Dorsolateral prefrontal cortex (tissue), 120 donors: ENCODE measurements at regions of chr6 and their contacts with region 1.

Region 1: GRCh38 chr6:138115877-138116660 is 8.8 kb upstream of the PERP start:
- DNase-seq: peak; percentile 31 to 76 (median 61)
- H3K4me3 ChIP-seq: peak overlapping the region in 1 of 59 donors; percentile 7
- H3K27ac ChIP-seq: no peak overlapping the region
- H3K27me3 ChIP-seq: peaks cover 0 to 10% (median 0%) of the 10 kb centered on the region in 45 donors
- CTCF ChIP-seq: peak; percentile 69 to 98 (median 86)

Region 2: GRCh38 chr6:138161338-138162110 is 45.5 kb after region 1 on chr6 and contains the start of gene ARFGEF3:
- intact Hi-C with region 1: loop called (anchors 2 to 5 kb)
- DNase-seq: peak in 9 of 10 donors; percentile 41 to 84 (median 64)
- H3K4me3 ChIP-seq: peak within 1 kb of the TSS; percentile 67 to 95 (median 85)
- H3K27ac ChIP-seq: peak within 1 kb of the TSS; percentile 79 to 98 (median 95)
- H3K27me3 ChIP-seq: no peaks in the 10 kb centered on the region
- CTCF ChIP-seq: peak in 4 of 56 donors; percentile 3 to 38 (median 16)
- total RNA-seq, gene ARFGEF3: 30.0 to 93.7 (median 67.0) TPM

Region 3: GRCh38 chr6:138211027-138211581 is 95.0 kb after region 1 on chr6:
- intact Hi-C with region 1: loop called (anchors 2 to 5 kb)
- DNase-seq: peak in 2 of 10 donors; percentile 52 to 61
- H3K4me3 ChIP-seq: no peak overlapping the region
- H3K27ac ChIP-seq: peak overlapping the region in 54 of 59 donors; percentile 2 to 90 (median 68)
- H3K27me3 ChIP-seq: no peaks in the 10 kb centered on the region
- CTCF ChIP-seq: peak in 55 of 56 donors; percentile 31 to 87 (median 59)

Region 4: GRCh38 chr6:138287144-138287955 is 171.3 kb after region 1 on chr6:
- intact Hi-C with region 1: loop called in 1 of 2 experiments (anchors 5 kb)
- DNase-seq: peak in 1 of 10 donors; percentile 59
- H3K4me3 ChIP-seq: no peak overlapping the region
- H3K27ac ChIP-seq: peak overlapping the region in 10 of 59 donors; percentile 7 to 45 (median 27)
- H3K27me3 ChIP-seq: no peaks in the 10 kb centered on the region
- CTCF ChIP-seq: peak in 55 of 56 donors; percentile 25 to 73 (median 56)

Region 5: DNA sequence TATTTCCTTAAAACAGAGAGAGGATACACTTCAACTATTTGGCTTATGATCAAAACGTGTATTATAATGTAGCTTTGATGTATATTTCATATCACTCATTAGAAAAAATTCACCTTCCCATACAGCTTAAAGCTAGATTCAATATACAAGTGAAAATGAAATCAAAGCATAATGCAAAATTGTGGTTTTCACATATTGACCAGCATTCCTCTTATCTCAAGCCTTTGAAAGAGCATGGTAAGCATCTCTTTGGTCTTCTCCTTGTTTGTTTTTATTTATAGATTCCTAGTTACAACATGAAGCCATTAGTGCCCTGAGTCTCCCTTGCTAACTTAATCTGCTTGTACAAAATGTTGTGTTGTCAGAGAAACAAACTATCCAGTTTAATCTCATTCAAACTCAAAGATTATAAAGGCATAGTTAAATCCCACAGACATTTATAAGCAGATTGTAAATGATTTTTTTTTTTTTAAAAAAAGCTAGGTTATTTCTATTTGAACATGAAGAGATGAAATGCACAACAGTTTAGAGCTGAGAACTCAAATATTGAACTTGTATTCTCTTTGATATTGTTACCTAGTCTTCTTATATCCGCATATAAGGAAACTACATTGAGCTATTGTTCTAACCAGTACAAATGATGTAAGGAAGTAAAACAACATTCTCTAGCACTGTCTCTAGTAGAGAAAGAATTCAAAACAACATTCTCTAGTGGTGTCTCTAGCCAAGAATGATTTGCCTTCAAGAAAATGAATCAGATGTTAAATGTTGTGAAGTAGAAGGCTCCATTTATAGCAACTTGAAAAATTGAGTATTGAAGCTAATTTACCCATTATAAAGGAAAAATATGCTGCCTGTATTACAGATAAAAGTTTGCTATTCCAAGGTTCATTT is 230.5 kb after region 1 on chr6:
- intact Hi-C with region 1: no loop called
- DNase-seq: no peak
- H3K4me3 ChIP-seq: no peak overlapping the region
- H3K27ac ChIP-seq: peak overlapping the region in 3 of 59 donors; percentile 16 to 25 (median 22)
- H3K27me3 ChIP-seq: no peaks in the 10 kb centered on the region
- CTCF ChIP-seq: no peak

Region 6: DNA sequence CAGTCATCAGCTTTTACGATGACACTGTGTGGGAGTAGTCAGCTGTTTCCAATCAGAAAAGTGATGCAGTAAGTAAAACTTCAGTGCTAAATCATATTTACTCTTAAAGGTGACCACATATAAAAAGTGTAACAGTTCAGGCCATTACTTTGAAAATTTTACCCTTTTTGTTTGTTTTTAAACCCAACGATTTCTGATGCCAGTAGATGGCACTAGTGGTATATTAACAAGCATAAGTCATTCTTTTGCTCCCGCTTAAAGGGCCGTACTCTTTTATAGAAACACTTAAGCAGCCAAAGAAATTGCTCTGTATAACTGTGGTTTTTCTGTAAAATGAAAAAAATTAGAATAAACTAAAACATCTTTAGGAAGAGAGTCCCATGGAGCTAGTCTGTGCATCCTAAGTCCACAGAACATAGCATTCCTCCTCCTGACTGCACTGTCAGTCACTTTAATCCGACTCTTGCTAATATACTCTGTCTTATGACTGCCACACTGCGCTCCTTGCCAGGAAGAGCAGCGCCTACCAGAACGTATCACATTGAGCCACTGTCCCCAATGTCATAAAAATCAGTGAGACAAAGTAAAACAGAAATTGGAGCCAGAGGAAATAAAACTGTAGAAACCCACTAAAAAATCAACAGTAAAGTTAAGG is 313.0 kb after region 1 on chr6:
- intact Hi-C with region 1: loop called in 1 of 2 experiments (anchors 10 kb)
- DNase-seq: peak in 1 of 10 donors; percentile 14
- H3K4me3 ChIP-seq: peak overlapping the region in 50 of 59 donors; percentile 1 to 57 (median 36)
- H3K27ac ChIP-seq: peak overlapping the region in 26 of 59 donors; percentile 5 to 88 (median 72)
- H3K27me3 ChIP-seq: no peaks in the 10 kb centered on the region
- CTCF ChIP-seq: peak in 55 of 56 donors; percentile 47 to 92 (median 73)

Region 7: DNA sequence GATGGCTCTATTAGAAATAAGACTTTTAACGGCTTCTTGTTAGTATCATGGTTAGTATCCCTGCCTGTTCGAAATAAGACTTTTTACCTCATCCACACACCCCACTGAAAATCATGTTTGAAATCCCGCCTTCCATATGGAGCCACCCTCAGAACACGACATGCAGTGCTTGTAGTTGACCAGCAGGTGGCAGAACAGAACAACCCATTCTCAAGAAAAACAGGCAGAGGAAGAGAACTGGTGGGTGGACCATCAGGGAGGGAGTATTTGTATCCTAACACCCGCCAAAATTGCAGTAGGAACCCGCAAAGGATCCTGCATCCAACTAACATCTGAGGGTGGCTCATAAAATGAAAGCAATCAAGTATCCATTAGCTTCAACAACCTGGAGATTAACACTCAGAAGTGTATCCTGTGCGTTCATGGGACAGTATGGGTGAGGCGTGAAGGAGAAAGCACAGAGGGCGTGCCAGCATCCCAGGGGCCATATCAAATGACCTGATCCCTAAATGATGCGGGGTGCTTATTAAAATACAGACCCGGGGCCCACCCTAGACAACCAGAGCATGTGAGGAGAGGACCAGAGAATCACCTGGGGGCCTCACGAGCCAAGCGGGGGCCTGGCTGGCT is 472.9 kb after region 1 on chr6:
- intact Hi-C with region 1: loop called (anchors 2 to 10 kb)
- DNase-seq: peak in 7 of 10 donors; percentile 47 to 64 (median 56)
- H3K4me3 ChIP-seq: no peak overlapping the region
- H3K27ac ChIP-seq: no peak overlapping the region
- H3K27me3 ChIP-seq: peaks cover 0 to 3% (median 0%) of the 10 kb centered on the region in 45 donors
- CTCF ChIP-seq: peak; percentile 80 to 99 (median 95)

Region 8: GRCh38 chr6:139640448-139640847 is 1524.4 kb after region 1 on chr6:
- intact Hi-C with region 1: no loop called
- DNase-seq: no peak
- H3K4me3 ChIP-seq: no peak overlapping the region
- H3K27ac ChIP-seq: no peak overlapping the region
- H3K27me3 ChIP-seq: no peaks in the 10 kb centered on the region
- CTCF ChIP-seq: no peak